GM23248 (cell line): ENCODE measurements at regions of chr12 and their contacts with region 1.

Region 1: DNA sequence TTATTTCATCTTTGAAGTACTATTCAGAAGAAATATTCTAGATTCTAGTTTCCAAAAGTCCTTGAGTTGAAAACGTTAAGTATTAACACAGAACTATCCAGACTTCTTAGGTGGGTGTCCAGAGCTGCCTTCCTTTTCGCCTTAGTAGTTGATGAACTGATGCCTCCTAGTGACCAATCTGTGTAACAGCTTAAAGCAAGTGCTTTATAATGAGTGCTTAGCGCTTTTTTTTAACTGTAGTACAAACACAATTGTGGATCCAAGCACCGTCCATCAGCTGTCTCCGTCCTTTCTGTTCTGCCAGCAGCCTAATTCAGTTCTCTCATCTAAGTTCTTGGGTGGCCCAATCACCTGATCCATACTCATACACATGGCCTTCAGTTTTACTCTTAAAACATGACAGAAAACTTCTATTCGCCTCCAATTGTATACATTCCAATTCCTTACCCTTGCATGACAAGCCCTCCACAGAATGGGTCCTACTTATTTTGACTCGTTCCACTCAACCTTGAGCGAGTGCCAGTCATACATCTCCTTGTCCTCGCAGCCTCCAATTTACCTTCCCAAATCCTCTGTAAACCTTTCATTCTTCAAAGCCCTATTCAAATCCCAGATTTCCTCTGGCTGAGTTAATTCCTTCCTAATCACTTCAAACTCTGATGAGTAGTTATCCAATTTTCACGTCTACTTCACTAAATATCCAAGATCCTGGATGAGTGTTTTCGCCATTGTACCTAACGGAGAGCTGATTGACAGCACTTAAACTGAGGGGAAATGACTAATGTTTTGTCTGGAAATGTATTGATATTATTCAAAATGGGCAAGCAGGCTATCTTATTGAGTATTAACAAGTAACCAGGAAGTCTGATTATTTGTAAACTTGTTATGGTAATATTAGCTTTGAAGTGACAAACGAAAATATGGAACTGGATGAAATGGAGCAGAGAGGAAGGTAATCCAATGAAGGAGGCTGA is 5.8 kb upstream of the PHLDA1 start:
- DNase-seq: peak; percentile 89
- H3K4me3 ChIP-seq: no peak overlapping the region
- H3K27ac ChIP-seq: no peak overlapping the region
- H3K4me1 ChIP-seq: peaks cover 32% of the 10 kb centered on the region
- H3K27me3 ChIP-seq: no peaks in the 10 kb centered on the region

Region 2: DNA sequence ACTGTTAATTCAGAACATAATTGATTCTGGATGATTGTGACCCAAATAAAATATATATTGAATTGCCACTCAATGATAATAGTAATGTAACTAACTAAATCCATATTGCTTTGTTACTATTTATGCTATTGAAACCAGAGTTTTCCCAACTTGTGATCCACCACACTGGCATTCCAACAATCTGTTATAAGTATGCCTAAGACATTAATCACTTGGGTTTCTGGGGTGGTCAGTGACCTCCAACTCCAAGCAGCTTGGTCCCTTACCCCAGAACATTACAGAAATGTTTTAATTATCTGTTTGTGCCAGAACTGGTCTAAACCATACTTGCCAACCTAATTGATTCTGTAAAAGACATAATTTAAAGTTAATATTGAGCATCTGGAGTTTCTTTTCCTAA is 721.9 kb before region 1 on chr12:
- in situ Hi-C with region 1: no loop called
- DNase-seq: peak; percentile 62
- H3K4me3 ChIP-seq: 0 out of 2 replicates have a peak overlapping the region, but pooled peaks have one; percentile 18
- H3K27ac ChIP-seq: peak overlapping the region; percentile 22; the same call in 1 of the 2 replicates
- H3K4me1 ChIP-seq: peaks cover 19% of the 10 kb centered on the region
- H3K27me3 ChIP-seq: no peaks in the 10 kb centered on the region

Region 3: DNA sequence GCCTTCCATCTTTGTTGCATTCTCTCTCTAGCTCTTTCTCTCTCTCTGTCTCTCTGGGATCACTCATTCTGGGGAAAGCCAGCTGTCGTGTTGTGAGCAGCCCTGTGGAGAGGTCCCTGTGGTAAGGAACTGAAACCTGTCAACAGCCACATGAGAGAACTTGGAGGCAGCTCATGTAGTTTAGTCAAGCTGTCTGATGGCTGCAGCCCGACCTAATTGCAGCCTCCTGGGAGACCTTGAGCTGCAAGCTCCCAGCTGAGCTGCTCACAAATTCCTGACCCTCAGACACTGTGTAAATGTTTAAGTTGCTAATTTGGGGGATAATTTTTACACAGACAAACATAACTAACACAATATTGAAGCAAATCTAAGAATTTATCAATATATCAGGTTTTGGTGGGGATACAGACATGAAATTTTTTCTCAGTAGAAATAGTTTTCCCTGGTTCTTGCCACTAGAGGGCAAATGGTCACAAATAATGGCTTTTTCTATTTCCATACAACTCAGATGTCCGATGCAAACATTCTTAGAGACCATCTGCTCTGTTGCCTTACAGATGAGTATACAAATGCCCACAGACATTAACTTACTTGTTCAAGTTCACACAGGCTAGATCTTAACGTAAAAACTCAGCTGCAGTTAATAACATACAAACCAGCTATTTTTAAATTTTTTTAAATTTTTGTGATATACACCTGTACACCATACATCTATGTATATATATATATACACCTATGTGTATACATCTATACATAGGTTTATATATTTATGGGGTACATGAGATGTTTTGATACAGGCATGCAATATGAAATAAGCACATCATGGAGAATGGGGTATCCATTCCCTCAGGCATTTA is 510.5 kb before region 1 on chr12:
- in situ Hi-C with region 1: loop called (anchors 5 kb)
- DNase-seq: peak; percentile 72
- H3K4me3 ChIP-seq: no peak overlapping the region
- H3K27ac ChIP-seq: no peak overlapping the region
- H3K4me1 ChIP-seq: no peaks in the 10 kb centered on the region
- H3K27me3 ChIP-seq: no peaks in the 10 kb centered on the region

Region 4: DNA sequence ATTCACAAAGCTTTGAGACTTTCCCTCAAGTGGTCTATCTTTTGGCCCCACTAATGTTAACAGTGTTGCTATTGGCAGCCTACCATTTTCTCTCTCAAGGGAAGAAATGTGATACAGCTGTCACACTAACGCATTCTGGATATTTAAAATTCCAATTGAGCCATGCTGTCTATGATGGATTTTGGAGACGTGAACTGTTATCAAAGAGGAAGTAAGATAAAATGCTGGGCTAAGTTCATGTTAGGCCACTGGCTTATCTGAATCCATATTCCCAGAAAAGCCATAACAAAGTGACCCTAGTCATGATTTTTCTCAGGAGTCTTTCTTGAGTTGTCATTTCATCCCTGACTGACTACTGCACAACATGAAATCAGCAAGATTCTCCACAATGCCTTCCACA is 206.0 kb before region 1 on chr12:
- in situ Hi-C with region 1: no loop called
- DNase-seq: no peak
- H3K4me3 ChIP-seq: no peak overlapping the region
- H3K27ac ChIP-seq: no peak overlapping the region
- H3K4me1 ChIP-seq: peaks cover 2% of the 10 kb centered on the region
- H3K27me3 ChIP-seq: no peaks in the 10 kb centered on the region